OCI-LY7 (cell line): ENCODE measurements at regions of chr11 and their contacts with region 1.

Region 1: GRCh38 chr11:43680521-43681400 is at the start of gene HSD17B12:
- DNase-seq: peak; percentile 99
- H3K4me3 ChIP-seq: peak within 1 kb of the TSS; percentile 89
- H3K27ac ChIP-seq: peak within 1 kb of the TSS; percentile 84
- H3K4me1 ChIP-seq: peaks cover 34% of the 10 kb centered on the region
- CTCF ChIP-seq: 0 out of 2 replicates have a peak, but pooled peaks have one; percentile 18
- total RNA-seq, gene HSD17B12: 58.0 and 70.9 TPM in 2 replicates

Region 2: GRCh38 chr11:43358801-43359421 is 321.9 kb before region 1 on chr11 and contains the start of gene TTC17:
- CTCF ChIA-PET with region 1: no interaction called
- POLR2A ChIA-PET with region 1: no interaction called
- intact Hi-C with region 1: loop called (anchors 2 kb)
- DNase-seq: peak; percentile 95
- H3K4me3 ChIP-seq: peak within 1 kb of the TSS; percentile 89
- H3K27ac ChIP-seq: peak within 1 kb of the TSS; percentile 75
- H3K4me1 ChIP-seq: peaks cover 22% of the 10 kb centered on the region
- CTCF ChIP-seq: no peak
- total RNA-seq, gene TTC17: 71.3 and 73.7 TPM in 2 replicates

Region 3: DNA sequence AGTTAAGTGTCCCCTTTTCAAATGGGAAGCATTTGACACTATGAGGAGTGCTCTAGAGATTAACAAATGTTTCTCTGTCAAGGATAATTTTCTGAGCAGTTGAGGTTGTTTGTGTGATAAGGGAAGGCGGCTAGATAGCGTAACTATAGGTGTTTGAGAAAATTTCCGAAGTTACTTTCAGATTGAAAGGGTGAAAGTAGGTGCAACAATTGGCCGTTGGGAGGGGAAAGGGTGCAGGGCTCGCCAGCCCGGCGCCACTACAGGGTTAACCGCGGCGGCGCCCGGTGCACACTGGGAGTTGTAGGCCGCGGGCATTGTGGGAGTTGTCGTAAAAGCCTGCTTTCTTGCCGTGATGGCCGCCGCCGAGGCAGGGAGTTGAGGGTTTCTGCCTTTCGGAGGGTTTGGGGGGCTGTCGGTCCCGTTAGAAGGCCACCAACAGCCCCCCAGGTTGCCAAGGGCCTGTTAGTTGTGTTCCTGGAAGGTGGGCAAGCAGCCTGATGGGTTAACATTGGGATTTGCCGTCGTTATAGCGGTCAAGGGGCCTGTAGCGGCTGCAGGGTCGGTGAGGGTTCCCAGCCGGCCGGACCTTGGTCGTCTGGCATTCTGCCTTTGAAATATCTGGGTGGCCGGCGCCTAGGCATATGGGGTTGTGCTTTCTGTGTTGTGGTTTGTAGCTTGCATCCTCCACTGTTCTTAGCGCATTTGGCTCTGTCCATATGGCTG is 36.7 kb before region 1 on chr11:
- CTCF ChIA-PET with region 1: no interaction called
- POLR2A ChIA-PET with region 1: no interaction called
- intact Hi-C with region 1: loop called (anchors 2 kb)
- DNase-seq: peak; percentile 92
- H3K4me3 ChIP-seq: peak overlapping the region; percentile 94
- H3K27ac ChIP-seq: no peak overlapping the region
- H3K4me1 ChIP-seq: peaks cover 7% of the 10 kb centered on the region
- CTCF ChIP-seq: no peak

Region 4: GRCh38 chr11:43694477-43694876 is 13.7 kb after region 1 on chr11:
- CTCF ChIA-PET with region 1: no interaction called
- POLR2A ChIA-PET with region 1: interaction called, 12 read pairs
- intact Hi-C with region 1: loop called (anchors 1 kb)
- DNase-seq: peak; percentile 75
- H3K4me3 ChIP-seq: peak overlapping the region; percentile 59
- H3K27ac ChIP-seq: peak overlapping the region; percentile 90
- H3K4me1 ChIP-seq: peaks cover 83% of the 10 kb centered on the region
- CTCF ChIP-seq: no peak

Region 5: GRCh38 chr11:43738590-43739409 is 58.0 kb after region 1 on chr11:
- CTCF ChIA-PET with region 1: no interaction called
- POLR2A ChIA-PET with region 1: no interaction called
- intact Hi-C with region 1: loop called (anchors 5 kb)
- DNase-seq: no peak
- H3K4me3 ChIP-seq: no peak overlapping the region
- H3K27ac ChIP-seq: no peak overlapping the region
- H3K4me1 ChIP-seq: peaks cover 14% of the 10 kb centered on the region
- CTCF ChIP-seq: no peak

Region 6: DNA sequence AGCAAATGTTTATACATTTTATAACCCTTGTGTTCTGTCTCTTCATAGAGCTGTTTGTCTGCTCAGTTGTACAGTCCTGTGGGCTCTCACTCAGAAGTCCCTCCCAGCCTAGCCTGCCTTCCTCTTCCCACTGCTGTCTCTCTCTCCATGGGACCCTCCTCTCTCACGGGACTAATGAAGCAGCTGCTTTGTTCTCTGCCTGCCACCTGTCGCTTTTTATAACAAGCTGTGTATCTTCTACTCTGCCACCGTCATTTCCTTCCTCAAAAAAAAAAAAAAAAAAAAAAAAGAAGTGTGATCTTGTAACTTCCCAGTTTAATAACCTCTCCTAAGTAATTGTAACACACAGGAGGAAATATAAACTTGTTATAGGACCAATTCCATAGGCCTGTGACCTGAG is 107.7 kb after region 1 on chr11:
- CTCF ChIA-PET with region 1: no interaction called
- POLR2A ChIA-PET with region 1: interaction called, 4 read pairs
- intact Hi-C with region 1: loop called (anchors 5 kb)
- DNase-seq: peak; percentile 79
- H3K4me3 ChIP-seq: peak overlapping the region; percentile 23
- H3K27ac ChIP-seq: peak overlapping the region; percentile 66
- H3K4me1 ChIP-seq: peaks cover 24% of the 10 kb centered on the region
- CTCF ChIP-seq: no peak